ENCODE measurements at regions of chr6 and their contacts with region 1.

Region 1: GRCh38 chr6:134161036-134161435 is 108.6 kb upstream of the SLC2A12 start:
- DNase-seq: no peak
- H3K4me3 ChIP-seq: no peak overlapping the region
- H3K4me3 Mint-ChIP-seq: peak overlapping the region; percentile 39
- H3K27ac Mint-ChIP-seq: peak overlapping the region; percentile 90
- H3K4me1 ChIP-seq: peaks cover 18% of the 10 kb centered on the region
- H3K4me1 Mint-ChIP-seq: peaks cover 20% of the 10 kb centered on the region
- H3K27me3 ChIP-seq: no peaks in the 10 kb centered on the region
- H3K27me3 Mint-ChIP-seq: no peaks in the 10 kb centered on the region
- CTCF ChIP-seq: no peak

Region 2: DNA sequence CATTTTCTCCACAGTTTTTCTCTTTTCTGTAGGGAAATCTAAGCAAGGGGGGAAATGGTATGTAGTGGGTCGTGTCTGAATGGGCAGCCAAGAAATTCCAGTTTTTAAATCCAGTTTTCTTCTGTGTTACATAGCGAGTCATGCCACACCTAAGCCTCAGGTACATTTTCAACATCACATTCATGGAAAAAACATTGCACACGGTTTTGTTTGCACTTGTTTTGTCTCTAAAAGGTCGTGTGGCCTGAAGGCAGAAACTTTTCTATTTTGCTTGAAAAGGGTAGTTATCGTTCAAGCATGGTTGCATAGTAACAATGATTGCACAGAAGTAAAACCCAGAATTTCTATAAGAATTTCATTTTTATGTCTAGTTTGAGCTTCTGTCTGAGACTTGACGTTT is 1830.3 kb before region 1 on chr6:
- CTCF ChIA-PET with region 1: no interaction called
- POLR2A ChIA-PET with region 1: no interaction called
- intact Hi-C with region 1: no loop called
- DNase-seq: no peak
- H3K4me3 ChIP-seq: no peak overlapping the region
- H3K4me3 Mint-ChIP-seq: no peak overlapping the region
- H3K27ac Mint-ChIP-seq: no peak overlapping the region
- H3K4me1 ChIP-seq: peaks cover 20% of the 10 kb centered on the region
- H3K4me1 Mint-ChIP-seq: peaks cover 20% of the 10 kb centered on the region
- H3K27me3 ChIP-seq: no peaks in the 10 kb centered on the region
- H3K27me3 Mint-ChIP-seq: no peaks in the 10 kb centered on the region
- CTCF ChIP-seq: no peak

Region 3: GRCh38 chr6:134317471-134318131 is 156.6 kb after region 1 on chr6 and contains the start of gene SGK1:
- CTCF ChIA-PET with region 1: no interaction called
- POLR2A ChIA-PET with region 1: no interaction called
- intact Hi-C with region 1: no loop called
- DNase-seq: peak; percentile 27 to 36
- H3K4me3 ChIP-seq: peak within 1 kb of the TSS; percentile 32
- H3K4me3 Mint-ChIP-seq: peak within 1 kb of the TSS; percentile 69
- H3K27ac Mint-ChIP-seq: no peak within 1 kb of the TSS
- H3K4me1 ChIP-seq: 0 out of 2 replicates have a peak, but pooled peaks cover 3% of the 10 kb centered on the region
- H3K4me1 Mint-ChIP-seq: no peaks in the 10 kb centered on the region
- H3K27me3 ChIP-seq: no peaks in the 10 kb centered on the region
- H3K27me3 Mint-ChIP-seq: no peaks in the 10 kb centered on the region
- CTCF ChIP-seq: peak in 1 of 2 experiments; percentile 5
- total RNA-seq, gene SGK1: 42.6 and 45.9 TPM in 2 replicates

Region 4: GRCh38 chr6:134938896-134939295 is 777.9 kb after region 1 on chr6:
- CTCF ChIA-PET with region 1: no interaction called
- POLR2A ChIA-PET with region 1: no interaction called
- intact Hi-C with region 1: loop called (anchors 1 kb)
- DNase-seq: no peak
- H3K4me3 ChIP-seq: no peak overlapping the region
- H3K4me3 Mint-ChIP-seq: no peak overlapping the region
- H3K27ac Mint-ChIP-seq: no peak overlapping the region
- H3K4me1 ChIP-seq: peaks cover 6% of the 10 kb centered on the region; the same call in 1 of the 2 replicates
- H3K4me1 Mint-ChIP-seq: no peaks in the 10 kb centered on the region
- H3K27me3 ChIP-seq: no peaks in the 10 kb centered on the region
- H3K27me3 Mint-ChIP-seq: no peaks in the 10 kb centered on the region
- CTCF ChIP-seq: no peak

Measured in Caco-2 (cell line).